GM12878 (cell line): ENCODE measurements at regions of chr17 and their contacts with region 1.

Region 1: GRCh38 chr17:81484195-81484979 is 28.2 kb downstream of the ACTG1 start:
- DNase-seq: peak; percentile 17
- ATAC-seq: peak; percentile 85
- H3K4me3 ChIP-seq: peak overlapping the region; percentile 46; the same call in 1 of the 2 replicates
- H3K27ac ChIP-seq: no peak overlapping the region
- H3K4me1 ChIP-seq: peaks cover 12% of the 10 kb centered on the region
- H3K27me3 ChIP-seq: peaks cover 7 to 8% of the 10 kb centered on the region in 2 experiments; a peak in 3 of 4 replicates
- CTCF ChIP-seq: peak; percentile 84 to 99 (median 94); a peak in 5 of 6 replicates
- EP300 ChIP-seq: no peak
- POLR2A ChIP-seq: no peak
- RAD21 ChIP-seq: peak; percentile 94

Region 2: DNA sequence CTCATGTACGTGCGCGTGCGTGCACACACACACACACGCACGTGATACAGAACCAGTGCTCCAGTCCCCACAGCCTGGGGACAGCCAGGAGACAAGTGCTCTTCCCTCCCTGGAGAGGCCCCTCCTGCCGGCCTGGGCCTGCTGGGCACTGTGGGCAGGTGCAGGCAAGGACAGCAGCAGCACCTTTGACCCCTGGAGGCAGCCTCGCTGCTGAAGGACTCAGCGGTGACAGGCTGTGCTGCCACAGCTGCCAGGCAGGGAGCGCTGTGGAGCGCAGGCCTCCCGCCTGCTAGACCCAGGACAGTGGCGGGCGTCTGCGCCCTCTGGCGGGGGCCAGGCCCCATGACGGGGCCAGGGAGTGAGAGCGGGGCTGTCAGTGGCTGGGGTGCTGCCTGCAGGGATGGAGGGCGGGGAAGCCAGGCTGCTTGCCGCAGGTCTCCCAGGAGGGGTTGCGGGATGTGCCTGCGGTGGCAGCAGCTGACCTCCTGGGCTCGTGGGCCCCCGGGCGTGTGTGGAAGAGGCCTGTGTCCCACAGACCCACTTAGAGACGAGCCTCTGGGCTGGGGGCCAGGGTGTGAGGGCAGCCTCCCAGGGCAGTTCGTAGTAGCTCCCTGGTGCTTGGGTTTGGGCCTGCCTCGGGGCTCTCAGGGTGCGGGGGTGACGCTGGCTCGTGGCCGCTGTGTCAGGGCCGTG is 382.6 kb before region 1 on chr17:
- CTCF ChIA-PET with region 1: no interaction called
- POLR2A ChIA-PET with region 1: no interaction called
- RAD21 ChIA-PET with region 1: no interaction called
- SMC1A ChIA-PET with region 1: no interaction called
- in situ Hi-C with region 1: no loop called
- intact Hi-C with region 1: loop called (anchors 5 kb)
- DNase-seq: peak; percentile 13
- ATAC-seq: peak; percentile 99
- H3K4me3 ChIP-seq: no peak overlapping the region
- H3K27ac ChIP-seq: no peak overlapping the region
- H3K4me1 ChIP-seq: no peaks in the 10 kb centered on the region
- H3K27me3 ChIP-seq: no peaks in the 10 kb centered on the region; a peak in 2 of 4 replicates
- CTCF ChIP-seq: peak; percentile 100; a peak in 5 of 6 replicates
- EP300 ChIP-seq: no peak
- POLR2A ChIP-seq: no peak
- RAD21 ChIP-seq: peak; percentile 83

Region 3: GRCh38 chr17:81142301-81143199 is 341.8 kb before region 1 on chr17:
- CTCF ChIA-PET with region 1: interaction called, 4 read pairs
- POLR2A ChIA-PET with region 1: no interaction called
- RAD21 ChIA-PET with region 1: interaction called, 5 read pairs
- SMC1A ChIA-PET with region 1: no interaction called
- in situ Hi-C with region 1: loop called (anchors 25 kb)
- intact Hi-C with region 1: loop called (anchors 5 kb)
- DNase-seq: peak; percentile 5
- ATAC-seq: peak; percentile 98
- H3K4me3 ChIP-seq: no peak overlapping the region
- H3K27ac ChIP-seq: no peak overlapping the region
- H3K4me1 ChIP-seq: no peaks in the 10 kb centered on the region
- H3K27me3 ChIP-seq: no peaks in the 10 kb centered on the region
- CTCF ChIP-seq: peak; percentile 62 to 76 (median 76)
- EP300 ChIP-seq: no peak
- POLR2A ChIP-seq: no peak
- RAD21 ChIP-seq: peak; percentile 74

Region 4: GRCh38 chr17:81253358-81254131 is 230.8 kb before region 1 on chr17:
- CTCF ChIA-PET with region 1: interaction called, 44 read pairs
- POLR2A ChIA-PET with region 1: no interaction called
- RAD21 ChIA-PET with region 1: interaction called, 27 read pairs
- SMC1A ChIA-PET with region 1: interaction called, 12 read pairs
- in situ Hi-C with region 1: loop called (anchors 5 kb)
- intact Hi-C with region 1: loop called (anchors 1 kb)
- DNase-seq: no peak
- ATAC-seq: peak; percentile 81
- H3K4me3 ChIP-seq: no peak overlapping the region
- H3K27ac ChIP-seq: no peak overlapping the region
- H3K4me1 ChIP-seq: no peaks in the 10 kb centered on the region
- H3K27me3 ChIP-seq: no peaks in the 10 kb centered on the region
- CTCF ChIP-seq: peak; percentile 60 to 85 (median 72)
- EP300 ChIP-seq: no peak
- POLR2A ChIP-seq: no peak
- RAD21 ChIP-seq: peak; percentile 70

Region 5: DNA sequence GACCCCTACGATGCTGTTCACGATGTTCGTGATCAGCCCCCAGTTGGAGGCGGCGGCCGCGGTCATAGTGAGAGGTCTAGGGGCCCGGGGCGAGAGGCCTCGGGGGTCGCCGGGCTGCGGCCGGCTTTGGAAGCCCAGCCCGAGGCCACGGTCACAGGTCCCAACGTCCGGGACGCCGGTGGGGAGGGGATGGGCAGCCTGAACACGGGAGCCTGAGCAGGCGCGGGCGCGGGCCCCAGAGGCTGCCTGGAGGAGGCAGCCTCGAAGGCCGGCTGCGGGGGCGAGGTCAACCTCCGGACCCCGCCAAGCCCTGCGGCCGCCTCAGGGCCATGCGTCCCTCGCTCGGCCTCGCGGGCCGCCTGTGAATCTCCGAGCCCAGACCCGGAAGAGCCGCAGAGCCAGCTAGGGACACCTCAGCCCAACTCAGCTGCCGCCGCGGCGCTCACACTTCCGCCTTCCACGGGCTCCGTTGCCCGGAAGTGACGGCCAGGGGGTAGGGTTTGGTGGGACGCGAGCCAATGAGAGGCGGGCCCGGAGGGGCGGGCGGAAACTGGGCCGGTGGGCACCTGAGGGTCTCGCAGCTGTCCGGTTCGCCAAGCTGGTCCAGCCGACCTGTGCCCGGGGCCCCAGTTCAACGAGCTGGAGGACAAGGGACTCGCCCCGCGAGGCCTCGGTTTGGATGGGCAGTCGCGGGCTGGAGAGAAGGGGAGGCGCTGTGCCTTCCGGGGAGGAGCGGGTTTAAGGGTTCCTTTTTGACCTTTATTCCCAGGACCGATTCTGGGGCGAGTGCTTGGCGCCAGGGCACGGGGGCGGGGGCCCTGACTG is 189.3 kb before region 1 on chr17 and contains the start of gene SLC38A10:
- CTCF ChIA-PET with region 1: interaction called, 34 read pairs
- POLR2A ChIA-PET with region 1: no interaction called
- RAD21 ChIA-PET with region 1: interaction called, 19 read pairs
- SMC1A ChIA-PET with region 1: interaction called, 14 read pairs
- in situ Hi-C with region 1: no loop called
- intact Hi-C with region 1: loop called (anchors 1 kb)
- DNase-seq: peak; percentile 41
- ATAC-seq: peak; percentile 95
- H3K4me3 ChIP-seq: peak within 1 kb of the TSS; percentile 82
- H3K27ac ChIP-seq: peak within 1 kb of the TSS; percentile 93
- H3K4me1 ChIP-seq: peaks cover 6% of the 10 kb centered on the region; the same call in 1 of the 2 replicates
- H3K27me3 ChIP-seq: no peaks in the 10 kb centered on the region
- CTCF ChIP-seq: no peak
- EP300 ChIP-seq: no peak
- POLR2A ChIP-seq: peak; percentile 98
- RAD21 ChIP-seq: no peak
- polyA plus RNA-seq, gene SLC38A10: 0.52 to 3.2 TPM

Region 6: GRCh38 chr17:81519284-81519955 is 35.0 kb after region 1 on chr17:
- CTCF ChIA-PET with region 1: interaction called, 12 read pairs
- POLR2A ChIA-PET with region 1: interaction called, 3 read pairs
- RAD21 ChIA-PET with region 1: interaction called, 4 read pairs
- SMC1A ChIA-PET with region 1: interaction called, 6 read pairs
- in situ Hi-C with region 1: no loop called
- intact Hi-C with region 1: no loop called
- DNase-seq: no peak
- ATAC-seq: peak; percentile 39
- H3K4me3 ChIP-seq: peak overlapping the region; percentile 72
- H3K27ac ChIP-seq: peak overlapping the region; percentile 100
- H3K4me1 ChIP-seq: peaks cover 33% of the 10 kb centered on the region
- H3K27me3 ChIP-seq: no peaks in the 10 kb centered on the region
- CTCF ChIP-seq: peak; percentile 50 to 64 (median 61)
- EP300 ChIP-seq: no peak
- POLR2A ChIP-seq: peak; percentile 68
- RAD21 ChIP-seq: no peak

Region 7: GRCh38 chr17:81621494-81622130 is 137.2 kb after region 1 on chr17:
- CTCF ChIA-PET with region 1: no interaction called
- POLR2A ChIA-PET with region 1: no interaction called
- RAD21 ChIA-PET with region 1: no interaction called
- SMC1A ChIA-PET with region 1: no interaction called
- in situ Hi-C with region 1: no loop called
- intact Hi-C with region 1: no loop called
- DNase-seq: no peak
- ATAC-seq: no peak
- H3K4me3 ChIP-seq: no peak overlapping the region
- H3K27ac ChIP-seq: no peak overlapping the region
- H3K4me1 ChIP-seq: no peaks in the 10 kb centered on the region
- H3K27me3 ChIP-seq: no peaks in the 10 kb centered on the region
- CTCF ChIP-seq: no peak
- EP300 ChIP-seq: no peak
- POLR2A ChIP-seq: no peak
- RAD21 ChIP-seq: no peak